Activated CD8-positive, alpha-beta T cell treated with anti-CD3 and anti-CD28 coated beads, Interleukin-2, amount 10 ng/mL, durations not matched to agents 7 days and 5 days (primary cell): ENCODE measurements at regions of chr2 and their contacts with region 1.

Region 1: DNA sequence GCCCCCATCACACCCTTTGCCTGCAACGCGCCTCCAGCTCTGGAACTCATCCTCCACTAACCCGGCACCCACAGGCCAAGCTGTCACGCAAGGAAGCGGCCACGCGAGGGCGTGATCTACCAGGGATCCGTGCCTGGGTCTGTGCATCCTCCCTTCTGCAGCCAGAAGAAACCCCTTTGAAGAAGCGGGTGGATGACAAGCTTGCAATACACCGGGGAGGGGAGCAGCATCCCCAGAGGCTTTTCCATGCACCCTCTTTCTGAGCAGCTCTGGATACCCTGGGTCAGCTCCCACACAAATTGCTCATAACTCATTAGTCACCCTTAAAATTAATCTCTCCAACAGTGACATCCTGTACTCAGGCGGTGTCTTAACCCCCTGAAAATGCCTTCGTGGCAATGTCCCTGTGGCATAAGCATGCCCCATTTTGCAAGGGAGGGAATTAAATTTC is 47.6 kb downstream of the PDCL3 start:
- DNase-seq: peak; percentile 86
- ATAC-seq: peak; percentile 92
- H3K4me3 Mint-ChIP-seq: no peak overlapping the region
- H3K27ac Mint-ChIP-seq: no peak overlapping the region
- H3K4me1 Mint-ChIP-seq: no peaks in the 10 kb centered on the region
- H3K27me3 Mint-ChIP-seq: no peaks in the 10 kb centered on the region

Region 2: DNA sequence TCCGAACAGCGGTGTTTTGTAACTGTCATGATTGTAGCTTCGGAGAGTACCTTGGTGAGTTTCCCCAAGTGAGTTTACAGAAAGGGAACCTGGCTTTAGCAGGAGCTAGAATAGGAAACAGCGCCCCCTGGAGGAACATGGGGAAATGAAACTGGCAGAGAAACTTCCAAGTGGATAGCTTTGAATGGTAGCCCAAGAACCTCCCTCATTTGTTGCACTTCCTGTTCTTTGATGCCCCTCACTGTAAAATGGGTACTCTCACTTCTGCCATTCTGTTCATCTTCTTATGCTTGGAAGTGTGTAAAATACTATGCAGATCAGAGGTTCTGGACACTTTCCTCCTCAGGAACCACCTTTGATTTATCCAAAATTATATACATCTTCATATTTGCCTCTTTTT is 229.2 kb before region 1 on chr2:
- CTCF ChIA-PET with region 1: no interaction called
- POLR2A ChIA-PET with region 1: no interaction called
- DNase-seq: peak; percentile 84
- ATAC-seq: peak; percentile 60
- H3K4me3 Mint-ChIP-seq: no peak overlapping the region
- H3K27ac Mint-ChIP-seq: no peak overlapping the region
- H3K4me1 Mint-ChIP-seq: peaks cover 3% of the 10 kb centered on the region
- H3K27me3 Mint-ChIP-seq: no peaks in the 10 kb centered on the region

Region 3: GRCh38 chr2:100580367-100581276 is 29.8 kb before region 1 on chr2:
- CTCF ChIA-PET with region 1: interaction called, 12 read pairs
- POLR2A ChIA-PET with region 1: no interaction called
- DNase-seq: peak; percentile 74
- ATAC-seq: peak; percentile 91
- H3K4me3 Mint-ChIP-seq: peak overlapping the region; percentile 47
- H3K27ac Mint-ChIP-seq: peak overlapping the region; percentile 98
- H3K4me1 Mint-ChIP-seq: peaks cover 51% of the 10 kb centered on the region
- H3K27me3 Mint-ChIP-seq: no peaks in the 10 kb centered on the region

Region 4: GRCh38 chr2:100588071-100588786 is 22.2 kb before region 1 on chr2:
- CTCF ChIA-PET with region 1: interaction called, 29 read pairs
- POLR2A ChIA-PET with region 1: no interaction called
- DNase-seq: peak; percentile 47
- ATAC-seq: peak; percentile 91
- H3K4me3 Mint-ChIP-seq: no peak overlapping the region
- H3K27ac Mint-ChIP-seq: peak overlapping the region; percentile 16
- H3K4me1 Mint-ChIP-seq: peaks cover 53% of the 10 kb centered on the region
- H3K27me3 Mint-ChIP-seq: peaks cover 4% of the 10 kb centered on the region

Region 5: GRCh38 chr2:100630473-100630977 is 20.1 kb after region 1 on chr2:
- CTCF ChIA-PET with region 1: interaction called, 21 read pairs
- POLR2A ChIA-PET with region 1: no interaction called
- DNase-seq: peak; percentile 42
- ATAC-seq: peak; percentile 70
- H3K4me3 Mint-ChIP-seq: no peak overlapping the region
- H3K27ac Mint-ChIP-seq: peak overlapping the region; percentile 68
- H3K4me1 Mint-ChIP-seq: peaks cover 22% of the 10 kb centered on the region
- H3K27me3 Mint-ChIP-seq: peaks cover 11% of the 10 kb centered on the region

Region 6: GRCh38 chr2:100650151-100650550 is 39.7 kb after region 1 on chr2:
- CTCF ChIA-PET with region 1: interaction called, 12 read pairs
- POLR2A ChIA-PET with region 1: no interaction called
- DNase-seq: no peak
- ATAC-seq: no peak
- H3K4me3 Mint-ChIP-seq: no peak overlapping the region
- H3K27ac Mint-ChIP-seq: peak overlapping the region; percentile 19
- H3K4me1 Mint-ChIP-seq: peaks cover 43% of the 10 kb centered on the region
- H3K27me3 Mint-ChIP-seq: no peaks in the 10 kb centered on the region

Region 7: DNA sequence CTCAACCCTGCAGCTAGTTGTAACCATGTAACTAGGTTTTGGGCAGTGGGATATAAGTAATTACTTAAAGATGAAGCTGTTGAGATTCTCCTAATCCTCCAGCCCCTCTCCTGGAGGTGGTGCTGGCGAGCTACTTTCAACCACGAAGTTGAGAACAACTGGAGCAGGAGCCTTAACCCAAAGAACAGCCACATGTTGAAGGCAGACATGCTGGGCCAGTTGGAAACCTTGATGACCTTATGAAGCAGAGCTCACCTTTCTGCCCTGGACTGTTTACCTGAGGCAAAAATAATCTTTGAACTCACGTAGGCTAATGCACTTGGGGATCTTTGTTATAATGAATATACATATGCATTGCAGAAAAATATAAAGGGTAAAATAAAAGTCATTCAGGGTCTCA is 119.9 kb after region 1 on chr2:
- CTCF ChIA-PET with region 1: interaction called, 13 read pairs
- POLR2A ChIA-PET with region 1: no interaction called
- DNase-seq: peak; percentile 57
- ATAC-seq: peak; percentile 47
- H3K4me3 Mint-ChIP-seq: no peak overlapping the region
- H3K27ac Mint-ChIP-seq: no peak overlapping the region
- H3K4me1 Mint-ChIP-seq: no peaks in the 10 kb centered on the region
- H3K27me3 Mint-ChIP-seq: peaks cover 7% of the 10 kb centered on the region

Region 8: GRCh38 chr2:100984892-100985379 is 374.5 kb after region 1 on chr2:
- CTCF ChIA-PET with region 1: interaction called, 34 read pairs
- POLR2A ChIA-PET with region 1: no interaction called
- DNase-seq: peak; percentile 83
- ATAC-seq: peak; percentile 75
- H3K4me3 Mint-ChIP-seq: no peak overlapping the region
- H3K27ac Mint-ChIP-seq: no peak overlapping the region
- H3K4me1 Mint-ChIP-seq: peaks cover 7% of the 10 kb centered on the region
- H3K27me3 Mint-ChIP-seq: peaks cover 2% of the 10 kb centered on the region